K562 (cell line): ENCODE measurements at regions of chr7 and their contacts with region 1.

Region 1: DNA sequence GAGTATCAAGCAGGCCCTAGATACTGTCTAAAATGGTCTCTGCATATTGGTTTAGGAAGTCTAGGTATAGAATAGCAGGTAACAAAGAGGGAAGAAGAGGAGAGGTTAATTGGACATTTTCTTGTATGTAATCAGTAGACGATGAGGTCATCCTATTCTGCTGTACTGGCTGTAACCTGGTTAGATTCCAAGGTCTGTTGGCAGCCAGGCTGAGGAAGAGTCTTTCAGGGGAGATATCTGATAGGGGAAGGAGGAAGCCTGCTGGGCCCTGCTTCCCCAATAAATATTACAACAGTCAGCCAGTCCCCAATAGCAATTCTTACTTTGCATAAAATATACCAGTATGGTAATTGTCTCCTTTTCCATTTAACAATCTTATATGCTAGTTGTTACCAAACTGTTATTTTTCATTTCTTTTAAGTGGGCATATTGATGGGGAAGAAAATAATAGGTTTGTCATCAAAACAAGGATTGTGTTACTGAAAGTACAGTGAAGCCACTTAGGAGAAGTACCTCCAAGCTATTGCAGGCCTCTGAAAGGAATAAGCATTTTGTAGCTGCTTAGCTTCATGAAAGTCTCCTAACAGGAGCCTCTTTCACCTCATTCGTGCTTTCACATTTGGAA is 186.4 kb downstream of the LRRC4 start:
- DNase-seq: peak; percentile 36 to 62 (median 46)
- ATAC-seq: peak; percentile 84
- H3K4me3 ChIP-seq: no peak overlapping the region
- H3K27ac ChIP-seq: peak overlapping the region; percentile 30; the same call in 1 of the 3 replicates
- H3K4me1 ChIP-seq: peaks cover 6 to 15% of the 10 kb centered on the region in 2 experiments; a peak in 4 of 5 replicates
- H3K27me3 ChIP-seq: no peaks in the 10 kb centered on the region
- CTCF ChIP-seq: 0 out of 6 replicates have a peak, but pooled peaks of 1 of the 3 experiments have one; percentile 9
- EP300 ChIP-seq: 0 out of 2 replicates have a peak, but pooled peaks have one; percentile 16
- POLR2A ChIP-seq: no peak
- RAD21 ChIP-seq: peak in 1 of 2 experiments; percentile 30; a peak in 1 of 4 replicates

Region 2: GRCh38 chr7:127995156-127995880 is 150.5 kb after region 1 on chr7:
- CTCF ChIA-PET with region 1: no interaction called
- POLR2A ChIA-PET with region 1: no interaction called
- in situ Hi-C with region 1: no loop called
- intact Hi-C with region 1: loop called (anchors 5 kb)
- DNase-seq: peak in 2 of 4 experiments; percentile 40 to 52
- ATAC-seq: peak; percentile 17
- H3K4me3 ChIP-seq: no peak overlapping the region
- H3K27ac ChIP-seq: no peak overlapping the region
- H3K4me1 ChIP-seq: peaks cover 37 to 52% of the 10 kb centered on the region in 2 experiments; a peak in 4 of 5 replicates
- H3K27me3 ChIP-seq: no peaks in the 10 kb centered on the region
- CTCF ChIP-seq: no peak
- EP300 ChIP-seq: no peak
- POLR2A ChIP-seq: no peak
- RAD21 ChIP-seq: no peak